ENCODE measurements at regions of chr11 and their contacts with region 1.

Region 1: GRCh38 chr11:16871368-16871767 is 132.9 kb downstream of the C11orf58 start:
- DNase-seq: no peak
- H3K4me3 ChIP-seq: no peak overlapping the region
- H3K27ac ChIP-seq: no peak overlapping the region
- H3K4me1 ChIP-seq: peaks cover 0 to 2% of the 10 kb centered on the region in 2 donors
- H3K27me3 ChIP-seq: no peaks in the 10 kb centered on the region
- CTCF ChIP-seq: no peak
- POLR2A ChIP-seq: no peak

Region 2: DNA sequence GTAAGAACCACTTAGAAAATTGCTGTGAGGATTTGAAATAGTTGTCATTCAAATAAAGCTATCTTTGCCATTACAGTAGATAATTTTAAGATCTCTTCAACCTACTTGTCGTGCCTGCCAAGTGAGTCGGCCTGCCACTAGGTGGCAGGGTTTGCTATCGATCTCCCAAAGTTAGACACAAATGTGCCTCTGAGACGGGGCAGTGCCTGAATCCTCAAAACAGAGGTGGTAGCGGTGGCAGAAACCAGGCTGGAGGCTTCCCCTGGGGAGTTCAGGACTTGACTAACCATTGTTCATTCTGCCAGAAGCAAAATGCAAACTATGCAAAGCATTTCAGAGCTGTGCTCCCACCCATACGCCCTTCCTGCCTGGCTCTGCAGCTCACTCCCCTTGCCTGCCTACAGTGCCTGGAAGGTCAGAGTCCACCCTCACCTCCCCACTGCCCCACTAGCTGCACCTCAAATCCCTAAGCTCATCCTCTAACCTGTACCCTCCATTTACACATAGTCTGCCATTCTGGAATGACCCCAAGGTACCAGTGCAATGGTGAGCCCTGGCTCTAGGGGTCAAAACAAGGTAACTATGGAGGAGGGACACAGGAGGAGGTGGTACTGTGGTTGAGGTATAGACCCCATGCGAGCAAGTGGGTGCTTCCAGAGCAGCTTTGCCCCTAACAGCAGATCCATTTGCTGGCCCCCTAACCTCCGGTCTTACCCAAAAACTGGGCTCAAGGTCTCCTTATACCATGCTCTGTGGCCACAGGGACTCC is 50.9 kb before region 1 on chr11:
- intact Hi-C with region 1: loop called (anchors 10 kb)
- DNase-seq: peak; percentile 90 to 93
- H3K4me3 ChIP-seq: no peak overlapping the region
- H3K27ac ChIP-seq: peak overlapping the region in 1 of 3 donors; percentile 45
- H3K4me1 ChIP-seq: peaks cover 16 to 26% of the 10 kb centered on the region in 2 donors
- H3K27me3 ChIP-seq: no peaks in the 10 kb centered on the region
- CTCF ChIP-seq: peak; percentile 72 to 86 (median 86)
- POLR2A ChIP-seq: no peak

Region 3: DNA sequence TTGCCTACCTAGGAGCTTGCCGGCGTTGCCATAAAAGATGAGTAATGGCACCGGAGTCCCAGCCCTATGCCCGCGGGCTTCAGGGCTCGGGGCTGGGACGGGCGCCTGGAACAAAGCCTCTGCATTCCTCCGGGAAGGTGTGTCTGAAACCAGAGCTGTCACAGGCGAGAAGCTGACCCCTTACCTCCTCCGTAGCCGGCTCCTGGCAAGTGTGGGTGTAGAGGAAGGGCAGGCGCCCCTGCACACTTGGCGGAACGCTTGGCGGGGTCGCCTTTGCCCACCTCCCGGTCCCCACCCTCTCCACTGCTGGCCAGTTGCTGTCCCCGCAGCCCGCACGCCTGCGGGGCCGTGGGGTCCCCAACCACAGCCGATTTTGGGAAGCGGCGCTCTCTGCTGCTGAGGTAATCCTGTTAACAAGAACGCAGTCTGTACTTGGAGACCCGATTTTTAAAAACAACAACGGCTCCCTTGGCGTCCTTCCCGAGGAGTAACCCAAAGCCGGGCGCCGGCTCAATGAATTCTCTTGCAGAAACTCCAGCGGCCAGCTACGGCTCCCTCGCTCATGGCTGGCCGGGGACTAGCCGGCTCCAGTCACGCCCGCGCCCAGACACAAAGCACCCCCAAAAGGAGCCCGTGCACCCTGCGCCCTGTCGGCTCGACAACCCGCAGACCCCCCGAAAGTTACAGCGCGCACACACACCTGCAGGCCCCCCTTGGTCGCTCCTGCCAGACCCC is 53.6 kb after region 1 on chr11:
- intact Hi-C with region 1: no loop called
- DNase-seq: peak; percentile 96 to 97
- H3K4me3 ChIP-seq: peak overlapping the region; percentile 20 to 44 (median 42)
- H3K27ac ChIP-seq: peak overlapping the region; percentile 77 to 93 (median 85)
- H3K4me1 ChIP-seq: peaks cover 10 to 62% of the 10 kb centered on the region in 2 donors
- H3K27me3 ChIP-seq: no peaks in the 10 kb centered on the region
- CTCF ChIP-seq: no peak
- POLR2A ChIP-seq: peak in 1 of 2 donors; percentile 26

Region 4: DNA sequence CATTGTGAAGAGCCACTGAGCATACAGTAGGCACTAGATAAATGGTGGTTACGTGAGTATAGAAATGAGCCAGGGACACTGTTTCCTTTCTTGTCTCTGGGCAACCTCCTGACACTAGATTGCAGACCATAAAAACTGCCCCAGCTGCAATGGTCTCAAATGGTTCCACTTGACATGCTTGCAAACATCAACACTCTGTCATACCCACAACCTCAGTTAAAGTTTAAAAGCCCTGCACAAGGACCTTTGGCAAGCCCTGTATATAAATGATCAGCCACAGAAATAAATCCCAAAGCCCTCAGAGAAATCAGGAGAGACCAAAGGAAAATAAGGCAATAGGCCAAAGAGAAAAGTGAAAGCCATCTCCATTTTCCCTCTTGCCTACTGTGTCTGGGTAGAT is 122.1 kb after region 1 on chr11:
- intact Hi-C with region 1: no loop called
- DNase-seq: peak; percentile 56
- H3K4me3 ChIP-seq: no peak overlapping the region
- H3K27ac ChIP-seq: peak overlapping the region; percentile 82 to 91 (median 90)
- H3K4me1 ChIP-seq: peaks cover 63 to 65% of the 10 kb centered on the region in 2 donors
- H3K27me3 ChIP-seq: no peaks in the 10 kb centered on the region
- CTCF ChIP-seq: no peak
- POLR2A ChIP-seq: no peak

Measured in thyroid gland (tissue), 4 donors.